Dorsolateral prefrontal cortex (tissue), 120 donors: ENCODE measurements at regions of chr20 and their contacts with region 1.

Region 1: GRCh38 chr20:24469116-24469893 is at the start of gene SYNDIG1:
- DNase-seq: peak; percentile 68 to 84 (median 76)
- H3K4me3 ChIP-seq: peak within 1 kb of the TSS; percentile 55 to 92 (median 80)
- H3K27ac ChIP-seq: peak within 1 kb of the TSS; percentile 78 to 98 (median 93)
- H3K27me3 ChIP-seq: peaks cover 0 to 11% (median 0%) of the 10 kb centered on the region in 45 donors
- CTCF ChIP-seq: peak in 8 of 56 donors; percentile 2 to 33 (median 12)
- total RNA-seq, gene SYNDIG1: 26.8 to 67.4 (median 45.8) TPM

Region 2: DNA sequence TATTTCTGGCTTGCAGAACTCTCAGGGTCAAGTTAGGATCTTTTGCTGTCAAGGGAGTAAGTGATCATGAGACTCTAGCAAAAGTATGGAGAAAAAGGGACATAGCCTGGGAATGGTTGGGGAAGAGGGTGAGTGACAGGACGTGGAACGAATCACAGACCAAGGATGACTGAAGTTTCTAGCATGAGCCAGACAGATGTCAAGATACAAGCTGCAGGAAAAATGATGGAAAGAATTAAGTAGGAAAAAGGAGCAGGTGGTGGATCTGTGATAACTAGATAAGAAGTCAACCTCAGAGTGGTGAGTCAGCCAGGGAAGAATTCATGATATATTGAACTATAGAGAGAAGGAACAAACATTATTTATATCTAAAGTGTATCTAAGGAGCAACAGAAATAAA is 159.7 kb before region 1 on chr20:
- intact Hi-C with region 1: loop called (anchors 5 kb)
- DNase-seq: no peak
- H3K4me3 ChIP-seq: no peak overlapping the region
- H3K27ac ChIP-seq: no peak overlapping the region
- H3K27me3 ChIP-seq: peaks cover 0 to 6% (median 0%) of the 10 kb centered on the region in 45 donors
- CTCF ChIP-seq: no peak

Region 3: DNA sequence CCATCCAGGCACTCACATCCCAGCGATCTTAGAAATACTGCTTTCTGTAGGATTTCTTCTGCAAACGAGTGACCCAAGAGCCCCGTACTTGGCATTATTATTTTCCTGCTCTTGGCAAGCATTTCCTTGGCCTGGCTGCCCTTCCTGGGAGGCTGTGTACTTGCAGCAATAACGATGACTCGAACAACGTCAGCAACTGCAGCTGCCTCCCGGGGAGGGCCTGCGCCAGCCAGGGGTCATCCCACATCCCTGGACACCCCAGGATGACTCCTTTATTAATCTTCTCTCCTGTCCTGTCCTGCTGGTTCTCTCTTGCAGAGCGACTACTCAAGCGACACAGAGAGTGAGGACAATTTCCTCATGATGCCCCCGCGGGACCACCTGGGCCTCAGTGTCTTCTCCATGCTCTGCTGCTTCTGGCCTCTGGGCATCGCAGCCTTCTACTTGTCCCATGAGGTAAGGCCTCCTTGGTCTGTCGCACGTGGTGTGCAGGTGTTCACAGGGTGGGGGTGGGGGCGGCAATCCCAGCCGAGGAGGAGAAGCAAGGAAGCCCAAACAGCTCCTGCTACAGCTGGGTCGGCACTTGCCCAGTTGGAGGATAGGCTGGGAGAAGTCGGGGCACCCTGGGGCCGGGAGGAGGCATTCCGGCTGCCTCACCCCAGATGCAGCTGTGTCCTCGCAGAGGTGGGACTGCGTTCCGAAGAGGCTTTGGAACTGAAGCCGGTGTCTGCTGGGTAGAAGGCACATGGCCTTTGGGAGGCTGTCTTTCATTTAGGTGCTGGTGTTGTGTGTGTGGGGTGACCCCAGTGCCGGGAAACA is 115.4 kb after region 1 on chr20:
- intact Hi-C with region 1: loop called in 1 of 2 experiments (anchors 10 kb)
- DNase-seq: peak in 1 of 10 donors; percentile 47
- H3K4me3 ChIP-seq: no peak overlapping the region
- H3K27ac ChIP-seq: peak overlapping the region in 26 of 59 donors; percentile 8 to 76 (median 52)
- H3K27me3 ChIP-seq: no peaks in the 10 kb centered on the region
- CTCF ChIP-seq: no peak

Region 4: DNA sequence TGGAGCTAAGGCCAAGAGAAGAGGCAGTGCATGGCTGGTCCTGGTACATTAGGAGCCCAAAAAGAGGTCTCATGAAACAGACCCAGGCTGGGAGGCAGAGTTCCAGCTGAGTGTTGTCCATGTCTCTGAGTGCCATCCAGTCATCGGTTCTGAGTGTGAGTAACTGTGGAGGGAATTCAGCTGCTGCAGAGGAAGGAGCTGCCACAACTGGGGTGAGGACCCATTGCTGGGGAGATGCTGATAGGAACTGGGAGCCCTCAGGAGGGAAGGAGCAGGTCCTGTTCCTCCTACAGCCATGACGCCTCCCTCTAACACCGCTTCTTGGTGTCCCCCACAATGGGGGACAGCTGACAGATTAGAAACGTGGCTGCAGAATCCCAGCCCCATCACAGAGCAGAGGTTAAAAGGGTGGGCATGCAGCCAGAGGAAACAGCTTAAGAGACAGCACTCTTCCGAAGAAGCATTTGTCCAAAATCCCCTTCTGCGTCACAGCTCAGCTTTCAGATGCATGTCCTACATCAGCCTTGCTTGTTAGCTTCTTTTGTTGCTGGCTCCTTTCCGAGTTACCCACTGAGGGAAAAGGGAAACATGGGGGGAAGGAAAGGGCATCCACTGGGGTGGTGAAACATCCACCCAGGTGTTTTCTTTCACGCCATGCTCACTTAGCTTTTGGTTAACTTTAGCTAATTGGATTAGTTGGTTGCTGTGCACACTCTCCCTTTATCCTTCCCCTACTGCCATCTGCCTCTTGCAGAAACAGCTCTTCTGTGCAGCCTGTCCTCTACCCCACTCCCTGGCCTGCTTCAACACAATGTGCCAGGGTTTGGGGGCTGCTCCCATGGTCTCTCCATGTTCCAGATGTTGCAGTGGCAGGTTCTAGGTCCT is 239.3 kb after region 1 on chr20:
- intact Hi-C with region 1: no loop called
- DNase-seq: peak in 1 of 10 donors; percentile 8
- H3K4me3 ChIP-seq: no peak overlapping the region
- H3K27ac ChIP-seq: no peak overlapping the region
- H3K27me3 ChIP-seq: peaks cover 0 to 4% (median 0%) of the 10 kb centered on the region in 45 donors
- CTCF ChIP-seq: peak in 1 of 56 donors; percentile 27

Region 5: DNA sequence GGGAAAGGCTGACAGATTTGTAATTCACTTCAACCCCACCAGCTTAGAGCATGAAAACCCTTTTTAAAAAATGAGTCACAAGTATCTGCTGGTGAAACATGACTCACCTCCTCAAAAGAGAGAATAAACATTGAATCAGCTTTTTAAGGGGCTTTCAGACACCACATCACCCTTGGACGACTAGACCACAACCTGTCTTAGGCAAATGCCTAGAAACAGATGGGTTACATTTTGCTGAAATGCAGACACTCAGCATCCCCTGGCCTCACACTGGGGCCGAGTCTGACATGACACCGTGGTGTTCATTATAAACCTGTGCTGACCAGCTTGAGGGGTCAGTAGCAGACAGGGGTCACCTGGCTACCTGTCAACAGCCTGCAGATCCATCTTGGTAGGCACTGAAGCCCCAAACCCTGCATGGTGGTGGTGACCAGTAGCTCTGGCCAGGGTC is 304.5 kb after region 1 on chr20:
- intact Hi-C with region 1: loop called in 1 of 2 experiments (anchors 10 kb)
- DNase-seq: peak in 2 of 10 donors; percentile 8 to 20
- H3K4me3 ChIP-seq: no peak overlapping the region
- H3K27ac ChIP-seq: peak overlapping the region in 8 of 59 donors; percentile 2 to 76 (median 53)
- H3K27me3 ChIP-seq: no peaks in the 10 kb centered on the region
- CTCF ChIP-seq: no peak